ENCODE measurements at regions of chr14 and their contacts with region 1.

Region 1: DNA sequence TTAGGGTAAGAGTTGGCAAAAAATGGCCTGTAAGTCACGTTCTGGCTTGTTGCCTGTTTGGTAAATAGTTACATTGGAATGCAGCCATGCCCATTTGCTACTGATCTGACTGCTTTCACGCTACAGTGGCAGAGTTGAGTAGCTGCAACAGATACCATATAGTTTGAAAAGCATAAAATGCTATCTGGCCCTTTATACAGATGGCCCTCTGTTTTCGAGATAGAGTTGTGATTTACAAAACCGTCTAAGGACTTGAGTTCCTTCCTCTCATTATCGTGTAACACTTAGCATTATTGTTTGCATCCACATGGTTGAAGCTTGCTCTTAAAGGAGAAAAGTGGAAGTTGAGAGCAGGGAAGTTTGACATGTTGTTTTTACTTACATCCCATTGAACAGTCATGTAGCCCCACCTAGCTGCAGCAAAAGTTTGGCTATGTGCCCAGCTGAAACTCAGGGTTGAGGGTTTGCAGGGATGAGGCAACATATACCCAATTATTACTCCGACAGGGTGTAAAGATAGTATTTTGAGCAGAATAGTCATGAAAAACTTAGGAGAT is 11.3 kb upstream of the SCFD1 start:
- DNase-seq: peak in 2 of 5 donors; percentile 6 to 18
- H3K4me3 ChIP-seq: no peak overlapping the region
- H3K4me3 Mint-ChIP-seq: no peak overlapping the region
- H3K27ac ChIP-seq: no peak overlapping the region
- H3K27ac Mint-ChIP-seq: peak overlapping the region in 2 of 7 donors; percentile 15 to 72
- H3K4me1 ChIP-seq: no peaks in the 10 kb centered on the region
- H3K4me1 Mint-ChIP-seq: peaks cover 0 to 2% (median 0%) of the 10 kb centered on the region in 4 donors
- H3K27me3 ChIP-seq: no peaks in the 10 kb centered on the region
- H3K27me3 Mint-ChIP-seq: no peaks in the 10 kb centered on the region

Region 2: GRCh38 chr14:30375296-30375892 is 235.5 kb before region 1 on chr14:
- CTCF ChIA-PET with region 1: interaction called, 4 read pairs
- POLR2A ChIA-PET with region 1: no interaction called
- intact Hi-C with region 1: loop called (anchors 1 kb)
- DNase-seq: peak; percentile 36 to 50 (median 40)
- H3K4me3 ChIP-seq: no peak overlapping the region
- H3K4me3 Mint-ChIP-seq: no peak overlapping the region
- H3K27ac ChIP-seq: no peak overlapping the region
- H3K27ac Mint-ChIP-seq: no peak overlapping the region
- H3K4me1 ChIP-seq: no peaks in the 10 kb centered on the region
- H3K4me1 Mint-ChIP-seq: no peaks in the 10 kb centered on the region
- H3K27me3 ChIP-seq: no peaks in the 10 kb centered on the region
- H3K27me3 Mint-ChIP-seq: peaks cover 4 to 11% of the 10 kb centered on the region in 2 donors

Region 3: DNA sequence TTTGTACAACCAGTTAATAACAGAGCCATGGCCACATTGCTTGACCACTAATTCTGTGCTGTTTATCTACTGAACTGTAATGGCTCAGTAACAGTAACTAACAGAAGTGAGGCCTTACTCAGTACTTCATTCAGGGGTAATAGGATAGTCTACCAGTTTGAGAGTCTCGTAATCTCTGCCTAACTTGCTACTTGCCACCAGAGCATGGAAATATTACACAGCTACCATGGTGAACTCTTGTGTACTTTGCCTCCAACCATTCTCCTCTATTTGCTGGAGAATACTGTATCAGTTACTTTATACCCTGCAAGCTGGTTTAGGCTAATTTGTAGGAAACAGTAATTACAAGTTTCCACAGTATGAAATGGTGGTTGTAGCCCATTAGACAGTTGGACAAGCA is 21.9 kb after region 1 on chr14:
- CTCF ChIA-PET with region 1: no interaction called
- POLR2A ChIA-PET with region 1: no interaction called
- intact Hi-C with region 1: no loop called
- DNase-seq: no peak
- H3K4me3 ChIP-seq: no peak overlapping the region
- H3K4me3 Mint-ChIP-seq: no peak overlapping the region
- H3K27ac ChIP-seq: no peak overlapping the region
- H3K27ac Mint-ChIP-seq: peak overlapping the region in 1 of 7 donors; percentile 11
- H3K4me1 ChIP-seq: peaks cover 5% of the 10 kb centered on the region
- H3K4me1 Mint-ChIP-seq: peaks cover 8 to 28% (median 21%) of the 10 kb centered on the region in 4 donors
- H3K27me3 ChIP-seq: no peaks in the 10 kb centered on the region
- H3K27me3 Mint-ChIP-seq: no peaks in the 10 kb centered on the region

Region 4: DNA sequence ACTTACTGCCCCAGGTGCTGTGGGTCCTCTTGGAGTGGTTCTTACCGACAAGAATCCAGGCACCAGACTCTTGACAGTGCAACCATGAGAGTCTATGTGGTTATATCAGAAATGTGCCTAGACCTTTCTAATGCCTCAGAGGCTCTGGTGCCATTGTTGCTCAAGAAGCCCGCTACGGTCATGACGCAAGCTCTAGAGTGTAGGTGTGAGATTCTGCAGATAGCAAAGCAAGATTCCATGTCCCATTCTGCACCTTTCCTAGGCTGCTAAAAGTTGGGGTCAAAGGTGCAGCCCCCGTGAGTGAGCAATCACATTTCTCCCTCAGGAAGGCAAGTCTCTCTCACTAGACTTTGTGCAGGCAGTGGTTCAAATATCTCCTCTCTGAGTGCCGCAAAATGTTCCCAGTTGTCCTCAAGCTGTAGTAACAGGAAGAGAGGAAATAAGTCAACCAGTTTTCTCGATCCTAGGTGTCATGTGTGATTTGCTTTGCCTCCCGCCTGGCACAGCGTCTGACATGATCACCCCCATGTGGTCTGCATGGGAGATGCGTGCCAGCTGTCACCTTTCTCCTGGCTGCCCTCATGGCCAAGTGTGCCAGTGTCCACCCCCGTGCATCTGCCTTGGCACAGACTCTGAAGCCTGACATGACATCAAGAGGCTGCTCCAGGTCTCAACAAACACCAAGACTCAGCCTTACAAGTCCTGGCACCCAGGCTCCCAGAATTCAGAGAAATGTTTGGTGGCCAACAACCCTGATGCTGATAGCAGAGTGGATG is 141.0 kb after region 1 on chr14:
- CTCF ChIA-PET with region 1: no interaction called
- POLR2A ChIA-PET with region 1: no interaction called
- intact Hi-C with region 1: no loop called
- DNase-seq: peak in 1 of 5 donors; percentile 1
- H3K4me3 ChIP-seq: no peak overlapping the region
- H3K4me3 Mint-ChIP-seq: no peak overlapping the region
- H3K27ac ChIP-seq: no peak overlapping the region
- H3K27ac Mint-ChIP-seq: no peak overlapping the region
- H3K4me1 ChIP-seq: no peaks in the 10 kb centered on the region
- H3K4me1 Mint-ChIP-seq: no peaks in the 10 kb centered on the region
- H3K27me3 ChIP-seq: no peaks in the 10 kb centered on the region
- H3K27me3 Mint-ChIP-seq: peaks cover 0 to 5% of the 10 kb centered on the region in 2 donors

Measured in CD4-positive, alpha-beta memory T cell (primary cell).